B cell (primary cell): ENCODE measurements at regions of chr6 and their contacts with region 1.

Region 1: GRCh38 chr6:125749173-125749864 is at the start of gene HEY2:
- DNase-seq: peak; percentile 92
- ATAC-seq: peak; percentile 94
- H3K4me3 ChIP-seq: peak within 1 kb of the TSS; percentile 44 to 75 (median 67)
- H3K4me3 Mint-ChIP-seq: peak within 1 kb of the TSS; percentile 96
- H3K27ac ChIP-seq: peak within 1 kb of the TSS in 1 of 2 donors; percentile 37
- H3K27ac Mint-ChIP-seq: peak within 1 kb of the TSS; percentile 83
- H3K4me1 ChIP-seq: peaks cover 35 to 42% of the 10 kb centered on the region in 2 donors
- H3K4me1 Mint-ChIP-seq: peaks cover 37% of the 10 kb centered on the region
- H3K27me3 ChIP-seq: peaks cover 0 to 58% (median 50%) of the 10 kb centered on the region in 4 experiments
- H3K27me3 Mint-ChIP-seq: peaks cover 61% of the 10 kb centered on the region
- CTCF ChIP-seq: no peak
- total RNA-seq, gene HEY2: not detected in 2 replicates

Region 2: DNA sequence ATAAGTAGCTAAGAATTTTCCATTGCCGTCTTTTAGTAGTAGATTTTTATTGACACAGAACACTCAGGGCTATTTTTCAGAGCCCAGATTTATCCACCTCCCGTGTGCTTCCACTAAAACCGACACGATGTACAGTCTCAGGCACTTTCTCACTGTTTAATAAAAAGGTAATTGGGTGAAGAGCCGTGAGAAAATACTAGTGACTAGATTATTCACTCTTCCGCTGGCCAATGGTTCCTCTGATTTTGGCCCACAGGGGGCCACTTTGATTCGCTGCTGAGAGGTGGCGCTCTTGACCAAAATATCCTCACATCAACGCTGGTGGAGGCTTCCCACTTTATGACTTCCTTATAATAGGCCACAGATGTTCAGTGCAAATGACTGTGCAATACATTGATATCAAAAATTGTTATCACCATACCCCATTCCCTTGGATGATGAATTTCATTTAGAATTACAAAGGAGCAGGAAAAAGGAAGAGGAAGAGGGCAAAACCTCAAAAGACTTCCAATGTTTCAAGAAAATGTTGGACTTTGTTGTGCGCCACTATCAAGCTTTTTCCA is 435.2 kb before region 1 on chr6:
- CTCF ChIA-PET with region 1: interaction called, 375 read pairs
- POLR2A ChIA-PET with region 1: interaction called, 4 read pairs
- intact Hi-C with region 1: loop called (anchors 1 kb)
- DNase-seq: peak; percentile 79
- ATAC-seq: peak; percentile 85
- H3K4me3 ChIP-seq: no peak overlapping the region
- H3K4me3 Mint-ChIP-seq: no peak overlapping the region
- H3K27ac ChIP-seq: no peak overlapping the region
- H3K27ac Mint-ChIP-seq: no peak overlapping the region
- H3K4me1 ChIP-seq: no peaks in the 10 kb centered on the region
- H3K4me1 Mint-ChIP-seq: no peaks in the 10 kb centered on the region
- H3K27me3 ChIP-seq: peaks cover 0 to 5% (median 2%) of the 10 kb centered on the region in 4 experiments
- H3K27me3 Mint-ChIP-seq: peaks cover 16% of the 10 kb centered on the region
- CTCF ChIP-seq: peak; percentile 82

Region 3: DNA sequence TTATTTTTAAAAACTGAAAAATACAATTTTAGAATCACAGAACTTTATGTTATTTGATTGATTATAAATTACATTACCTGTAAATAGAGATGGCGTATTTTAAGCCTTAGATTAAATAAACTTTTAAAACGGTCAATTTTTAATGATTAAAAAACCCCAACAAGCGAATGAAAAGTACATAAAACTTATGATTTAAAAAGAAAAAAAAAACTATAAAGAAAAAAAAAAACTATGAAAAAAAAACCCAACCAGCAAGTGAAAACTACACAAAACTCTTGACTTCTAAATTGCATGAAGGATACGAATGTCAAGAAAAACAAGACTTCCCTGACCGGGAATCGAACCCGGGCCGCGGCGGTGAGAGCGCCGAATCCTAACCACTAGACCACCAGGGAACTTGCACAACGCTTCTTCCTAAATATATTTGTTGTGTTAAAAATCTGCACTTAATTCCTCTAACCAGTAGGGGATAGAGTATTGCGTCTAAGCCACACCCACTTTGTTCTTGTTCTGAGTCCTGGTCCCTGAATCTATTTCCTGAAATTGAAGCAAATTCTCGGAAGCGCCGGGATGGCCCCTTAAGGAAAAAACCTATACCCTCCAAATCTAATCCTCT is 30.7 kb after region 1 on chr6:
- CTCF ChIA-PET with region 1: interaction called, 16 read pairs
- POLR2A ChIA-PET with region 1: interaction called, 8 read pairs
- intact Hi-C with region 1: loop called (anchors 1 kb)
- DNase-seq: peak; percentile 95
- ATAC-seq: peak; percentile 83
- H3K4me3 ChIP-seq: peak overlapping the region; percentile 67 to 100 (median 84)
- H3K4me3 Mint-ChIP-seq: no peak overlapping the region
- H3K27ac ChIP-seq: peak overlapping the region; percentile 81 to 95
- H3K27ac Mint-ChIP-seq: no peak overlapping the region
- H3K4me1 ChIP-seq: peaks cover 5 to 6% of the 10 kb centered on the region in 2 donors
- H3K4me1 Mint-ChIP-seq: peaks cover 11% of the 10 kb centered on the region
- H3K27me3 ChIP-seq: no peaks in the 10 kb centered on the region
- H3K27me3 Mint-ChIP-seq: peaks cover 5% of the 10 kb centered on the region
- CTCF ChIP-seq: peak; percentile 37

Region 4: GRCh38 chr6:125798734-125799508 is 49.6 kb after region 1 on chr6:
- CTCF ChIA-PET with region 1: interaction called, 3 read pairs
- POLR2A ChIA-PET with region 1: no interaction called
- intact Hi-C with region 1: loop called (anchors 2 kb)
- DNase-seq: peak; percentile 78
- ATAC-seq: peak; percentile 86
- H3K4me3 ChIP-seq: peak overlapping the region in 1 of 5 experiments; percentile 32
- H3K4me3 Mint-ChIP-seq: peak overlapping the region; percentile 60
- H3K27ac ChIP-seq: peak overlapping the region in 1 of 2 donors; percentile 36
- H3K27ac Mint-ChIP-seq: peak overlapping the region; percentile 80
- H3K4me1 ChIP-seq: peaks cover 26 to 50% of the 10 kb centered on the region in 2 donors
- H3K4me1 Mint-ChIP-seq: peaks cover 55% of the 10 kb centered on the region
- H3K27me3 ChIP-seq: peaks cover 0 to 4% (median 0%) of the 10 kb centered on the region in 4 experiments
- H3K27me3 Mint-ChIP-seq: peaks cover 3% of the 10 kb centered on the region
- CTCF ChIP-seq: no peak

Region 5: GRCh38 chr6:126396131-126396530 is 646.8 kb after region 1 on chr6:
- CTCF ChIA-PET with region 1: no interaction called
- POLR2A ChIA-PET with region 1: no interaction called
- intact Hi-C with region 1: no loop called
- DNase-seq: no peak
- ATAC-seq: no peak
- H3K4me3 ChIP-seq: no peak overlapping the region
- H3K4me3 Mint-ChIP-seq: no peak overlapping the region
- H3K27ac ChIP-seq: no peak overlapping the region
- H3K27ac Mint-ChIP-seq: no peak overlapping the region
- H3K4me1 ChIP-seq: no peaks in the 10 kb centered on the region
- H3K4me1 Mint-ChIP-seq: no peaks in the 10 kb centered on the region
- H3K27me3 ChIP-seq: no peaks in the 10 kb centered on the region
- H3K27me3 Mint-ChIP-seq: no peaks in the 10 kb centered on the region
- CTCF ChIP-seq: no peak

Region 6: GRCh38 chr6:127266178-127266891 is 1517.0 kb after region 1 on chr6 and contains the start of gene RNF146:
- CTCF ChIA-PET with region 1: no interaction called
- POLR2A ChIA-PET with region 1: no interaction called
- intact Hi-C with region 1: loop called (anchors 2 kb)
- DNase-seq: peak; percentile 89
- ATAC-seq: peak; percentile 71
- H3K4me3 ChIP-seq: peak within 1 kb of the TSS; percentile 74 to 94 (median 93)
- H3K4me3 Mint-ChIP-seq: peak within 1 kb of the TSS; percentile 98
- H3K27ac ChIP-seq: peak within 1 kb of the TSS; percentile 94 to 98
- H3K27ac Mint-ChIP-seq: peak within 1 kb of the TSS; percentile 95
- H3K4me1 ChIP-seq: peaks cover 16 to 25% of the 10 kb centered on the region in 2 donors
- H3K4me1 Mint-ChIP-seq: peaks cover 39% of the 10 kb centered on the region
- H3K27me3 ChIP-seq: peaks cover 0 to 3% (median 0%) of the 10 kb centered on the region in 4 experiments
- H3K27me3 Mint-ChIP-seq: peaks cover 4% of the 10 kb centered on the region
- CTCF ChIP-seq: peak; percentile 76
- total RNA-seq, gene RNF146: 55.9 and 58.0 TPM in 2 replicates